ENCODE measurements at regions of chr7 and their contacts with region 1.

Region 1: GRCh38 chr7:40057292-40057691 is 77.1 kb downstream of the MPLKIP start:
- DNase-seq: no peak

Region 2: GRCh38 chr7:39672176-39672575 is 385.1 kb before region 1 on chr7:
- CTCF ChIA-PET with region 1: no interaction called
- POLR2A ChIA-PET with region 1: no interaction called
- DNase-seq: no peak

Region 3: GRCh38 chr7:39888191-39888845 is 169.0 kb before region 1 on chr7:
- CTCF ChIA-PET with region 1: interaction called, 10 read pairs
- POLR2A ChIA-PET with region 1: no interaction called
- DNase-seq: no peak

Region 4: DNA sequence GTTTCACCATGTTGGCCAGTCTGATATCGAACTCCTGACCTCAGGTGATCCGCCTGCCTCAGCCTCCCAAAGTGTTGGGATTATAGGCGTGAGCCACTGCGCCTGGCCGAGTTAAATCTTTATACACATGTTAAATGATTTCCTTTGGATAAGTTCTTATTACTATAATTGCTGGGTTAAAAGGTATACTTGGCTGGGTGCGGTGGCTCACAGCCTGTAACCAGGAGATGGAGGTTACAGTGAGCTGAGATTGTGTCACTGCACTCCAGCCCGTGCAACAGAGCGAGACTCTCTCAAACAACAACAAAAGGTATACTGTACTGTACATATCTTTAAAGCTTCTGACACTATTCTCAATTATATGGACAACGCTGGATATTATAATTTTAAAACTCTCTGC is 160.5 kb before region 1 on chr7:
- CTCF ChIA-PET with region 1: interaction called, 17 read pairs
- POLR2A ChIA-PET with region 1: no interaction called
- DNase-seq: no peak

Region 5: GRCh38 chr7:40027545-40027944 is 29.7 kb before region 1 on chr7:
- CTCF ChIA-PET with region 1: no interaction called
- POLR2A ChIA-PET with region 1: no interaction called
- DNase-seq: no peak

Region 6: DNA sequence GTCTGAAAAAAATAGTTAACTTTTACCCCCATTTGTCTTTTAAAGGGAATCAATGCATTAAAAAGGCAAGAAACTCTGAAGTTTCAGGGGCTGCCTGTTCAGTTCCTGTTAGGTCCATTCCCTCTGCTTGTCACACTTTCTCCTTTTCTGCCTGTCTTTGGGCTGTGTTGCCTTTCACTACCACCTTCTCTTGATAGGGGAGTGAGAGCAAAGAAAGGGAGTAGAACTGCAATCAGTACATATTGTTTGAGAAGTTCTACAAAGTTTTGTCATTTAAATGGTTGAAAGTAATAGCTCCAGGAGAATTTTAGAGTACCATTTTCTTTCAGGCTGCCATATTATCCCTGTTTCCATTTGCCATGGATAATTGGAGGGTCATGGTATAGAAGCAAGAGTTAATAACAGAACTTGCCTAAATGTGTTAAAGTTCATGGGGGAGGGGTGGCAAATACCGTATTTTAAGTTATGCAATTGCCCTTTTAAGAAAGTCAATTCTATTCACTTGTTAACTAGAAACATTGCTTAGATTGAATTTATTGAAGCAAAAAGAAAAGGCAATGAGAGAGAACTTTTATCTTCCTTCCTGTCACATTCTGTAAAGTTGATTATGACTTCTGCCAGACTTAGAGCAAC is 38.5 kb after region 1 on chr7:
- CTCF ChIA-PET with region 1: no interaction called
- POLR2A ChIA-PET with region 1: no interaction called
- DNase-seq: no peak

Region 7: GRCh38 chr7:40516376-40516775 is 459.1 kb after region 1 on chr7:
- CTCF ChIA-PET with region 1: no interaction called
- POLR2A ChIA-PET with region 1: no interaction called
- DNase-seq: no peak